ENCODE measurements at regions of chr1 and their contacts with region 1.

Region 1: DNA sequence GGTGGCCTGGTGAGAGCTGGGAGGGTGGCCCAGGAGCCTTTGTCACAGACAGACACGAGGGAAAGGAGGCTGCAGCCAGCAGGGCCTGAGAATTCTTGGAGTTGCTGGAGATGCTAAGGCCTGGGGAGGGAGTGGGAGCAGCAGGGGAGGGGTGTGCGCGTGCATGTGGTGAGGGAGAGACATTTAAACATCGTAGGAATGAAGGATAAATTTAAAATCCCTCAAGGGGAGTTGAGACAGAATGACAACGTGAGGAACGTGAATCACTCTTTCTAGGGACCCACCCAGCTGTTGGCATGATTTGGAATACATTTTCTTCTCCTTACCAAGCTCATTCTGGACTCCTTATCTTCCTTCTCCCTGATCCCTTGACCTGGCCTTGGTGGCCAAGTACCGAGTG is 73.3 kb upstream of the CACNA1E start:
- DNase-seq: no peak
- ATAC-seq: no peak
- H3K4me3 Mint-ChIP-seq: no peak overlapping the region
- H3K27ac Mint-ChIP-seq: no peak overlapping the region
- H3K4me1 Mint-ChIP-seq: no peaks in the 10 kb centered on the region
- H3K27me3 Mint-ChIP-seq: no peaks in the 10 kb centered on the region

Region 2: DNA sequence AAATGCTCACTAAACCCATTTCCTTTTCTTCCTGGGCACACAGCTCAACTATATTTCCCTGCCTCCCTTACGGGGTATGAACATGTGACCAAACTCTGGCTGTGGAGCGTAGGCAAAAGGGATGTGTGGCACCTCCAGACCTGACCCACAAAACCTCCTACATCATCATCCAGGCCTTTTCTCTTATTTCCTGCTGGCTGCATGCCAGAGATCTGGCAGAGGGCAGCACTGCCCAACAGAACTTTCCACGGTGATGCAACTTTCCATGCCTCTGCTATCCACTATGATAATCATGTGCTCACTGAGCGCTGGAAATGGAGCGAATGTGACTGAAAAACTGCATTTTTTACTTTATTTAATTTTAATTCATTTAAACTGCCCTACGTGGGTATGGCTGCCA is 26.3 kb before region 1 on chr1:
- CTCF ChIA-PET with region 1: no interaction called
- DNase-seq: no peak
- ATAC-seq: no peak
- H3K4me3 Mint-ChIP-seq: no peak overlapping the region
- H3K27ac Mint-ChIP-seq: no peak overlapping the region
- H3K4me1 Mint-ChIP-seq: no peaks in the 10 kb centered on the region
- H3K27me3 Mint-ChIP-seq: peaks cover 4% of the 10 kb centered on the region

Region 3: GRCh38 chr1:181397845-181398244 is 12.1 kb before region 1 on chr1:
- CTCF ChIA-PET with region 1: interaction called, 10 read pairs
- DNase-seq: peak; percentile 64
- ATAC-seq: peak; percentile 76
- H3K4me3 Mint-ChIP-seq: peak overlapping the region; percentile 30
- H3K27ac Mint-ChIP-seq: peak overlapping the region; percentile 82
- H3K4me1 Mint-ChIP-seq: peaks cover 41% of the 10 kb centered on the region
- H3K27me3 Mint-ChIP-seq: no peaks in the 10 kb centered on the region